PC-9 (cell line): ENCODE measurements at regions of chr17 and their contacts with region 1.

Region 1: DNA sequence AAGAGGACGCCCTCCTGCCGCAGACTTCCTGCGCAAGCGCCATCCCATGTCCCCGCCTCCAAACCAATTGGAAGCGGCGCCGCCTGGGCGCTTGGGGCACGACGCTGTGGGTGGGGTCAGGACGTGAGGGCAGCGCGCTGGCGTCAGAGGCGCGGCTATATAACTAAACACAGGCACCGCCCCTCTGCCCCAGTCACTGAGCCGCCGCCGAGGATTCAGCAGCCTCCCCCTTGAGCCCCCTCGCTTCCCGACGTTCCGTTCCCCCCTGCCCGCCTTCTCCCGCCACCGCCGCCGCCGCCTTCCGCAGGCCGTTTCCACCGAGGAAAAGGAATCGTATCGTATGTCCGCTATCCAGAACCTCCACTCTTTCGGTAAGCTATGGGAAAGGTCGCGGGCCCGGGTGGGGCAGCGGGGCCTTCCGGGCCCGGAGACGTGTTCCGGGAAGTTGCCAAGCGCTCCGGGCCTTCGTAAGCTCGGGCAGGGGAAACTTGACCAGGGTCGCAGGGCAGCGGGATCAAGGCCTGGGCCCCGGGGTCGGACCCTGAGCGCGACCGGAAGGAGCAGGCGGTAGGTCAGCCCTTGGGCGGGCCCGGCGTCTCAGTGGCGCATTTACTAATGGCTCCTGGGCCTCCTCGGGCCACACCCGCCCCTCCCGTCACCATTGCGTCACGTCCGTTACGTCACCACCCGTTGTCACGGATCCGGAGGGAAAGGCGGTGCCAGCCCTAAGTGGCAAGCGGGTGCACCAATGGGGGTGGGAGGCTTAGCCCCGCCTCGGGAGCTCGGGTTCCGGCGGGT is at the start of gene EIF1:
- DNase-seq: peak; percentile 96 to 99
- H3K4me3 ChIP-seq: peak within 1 kb of the TSS; percentile 88
- H3K27ac ChIP-seq: peak within 1 kb of the TSS; percentile 99
- H3K4me1 ChIP-seq: peaks cover 23% of the 10 kb centered on the region
- H3K27me3 ChIP-seq: no peaks in the 10 kb centered on the region; the same call in 1 of the 2 replicates
- CTCF ChIP-seq: no peak
- total RNA-seq, gene EIF1: 775 and 874 TPM in 2 replicates

Region 2: GRCh38 chr17:41530062-41531051 is 158.5 kb before region 1 on chr17:
- CTCF ChIA-PET with region 1: no interaction called
- POLR2A ChIA-PET with region 1: interaction called, 10 read pairs
- intact Hi-C with region 1: no loop called
- DNase-seq: peak; percentile 86 to 99
- H3K4me3 ChIP-seq: peak overlapping the region; percentile 93
- H3K27ac ChIP-seq: peak overlapping the region; percentile 95
- H3K4me1 ChIP-seq: peaks cover 66% of the 10 kb centered on the region
- H3K27me3 ChIP-seq: no peaks in the 10 kb centered on the region
- CTCF ChIP-seq: no peak

Region 3: DNA sequence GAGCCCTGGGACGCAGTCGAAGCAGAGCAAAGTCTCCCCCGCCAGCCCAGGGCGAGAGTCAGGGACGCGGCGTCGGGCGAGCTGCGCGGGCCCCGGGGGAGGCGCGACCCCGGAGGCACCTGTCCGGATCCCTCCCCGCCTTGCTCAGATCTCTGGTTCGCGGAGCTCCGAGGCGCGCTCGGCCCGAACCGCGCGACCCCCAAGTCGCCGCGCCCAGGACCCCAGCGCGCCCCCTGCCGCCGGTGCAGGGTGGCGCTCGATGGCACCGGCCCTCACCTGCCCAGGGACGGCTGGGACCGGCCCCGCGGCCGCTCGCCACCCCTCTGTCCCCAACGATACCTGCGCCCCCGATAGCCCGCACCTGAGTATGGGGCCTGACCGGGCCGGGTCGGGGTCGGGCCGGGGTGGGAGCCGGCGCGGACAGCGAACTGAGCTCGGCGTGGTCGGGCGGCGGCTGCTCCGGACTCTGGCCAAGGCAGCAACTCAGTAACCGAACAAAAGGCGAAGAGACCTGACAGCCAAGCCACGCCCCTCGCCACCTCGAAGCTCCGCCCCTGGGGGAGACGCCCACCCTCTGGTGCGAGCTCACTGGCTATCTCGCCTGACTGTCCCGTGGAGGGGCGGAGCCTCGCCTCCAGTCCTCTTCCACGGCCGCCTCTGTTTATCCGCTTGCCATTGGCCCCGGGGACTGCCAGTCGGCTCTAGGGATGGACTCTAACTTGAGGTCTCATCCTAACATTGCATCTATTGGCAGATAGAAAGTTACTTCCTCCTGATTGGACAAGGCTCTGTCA is 97.5 kb after region 1 on chr17 and contains the start of gene JUP:
- CTCF ChIA-PET with region 1: interaction called, 3 read pairs
- POLR2A ChIA-PET with region 1: interaction called, 14 read pairs
- intact Hi-C with region 1: loop called (anchors 5 kb)
- DNase-seq: peak; percentile 100
- H3K4me3 ChIP-seq: peak within 1 kb of the TSS; percentile 63
- H3K27ac ChIP-seq: peak within 1 kb of the TSS; percentile 98
- H3K4me1 ChIP-seq: peaks cover 39% of the 10 kb centered on the region
- H3K27me3 ChIP-seq: no peaks in the 10 kb centered on the region
- CTCF ChIP-seq: peak; percentile 77
- total RNA-seq, gene JUP: 259 TPM in 2 replicates

Region 4: GRCh38 chr17:41918314-41919164 is 229.6 kb after region 1 on chr17 and contains the start of gene ACLY:
- CTCF ChIA-PET with region 1: no interaction called
- POLR2A ChIA-PET with region 1: interaction called, 10 read pairs
- intact Hi-C with region 1: no loop called
- DNase-seq: peak; percentile 93 to 98
- H3K4me3 ChIP-seq: peak within 1 kb of the TSS; percentile 98
- H3K27ac ChIP-seq: peak within 1 kb of the TSS; percentile 80
- H3K4me1 ChIP-seq: peaks cover 38% of the 10 kb centered on the region
- H3K27me3 ChIP-seq: no peaks in the 10 kb centered on the region
- CTCF ChIP-seq: no peak
- total RNA-seq, gene ACLY: 106 and 184 TPM in 2 replicates